Activated naive CD4-positive, alpha-beta T cell treated with anti-CD3 and anti-CD28 coated beads for 36 hours (primary cell): ENCODE measurements at regions of chr3 and their contacts with region 1.

Region 1: GRCh38 chr3:18847583-18848197 is 300.6 kb upstream of the KCNH8 start:
- DNase-seq: no peak
- H3K4me3 Mint-ChIP-seq: no peak overlapping the region
- H3K27ac Mint-ChIP-seq: no peak overlapping the region
- H3K4me1 Mint-ChIP-seq: peaks cover 23% of the 10 kb centered on the region
- H3K27me3 Mint-ChIP-seq: no peaks in the 10 kb centered on the region

Region 2: GRCh38 chr3:18830087-18830486 is 17.6 kb before region 1 on chr3:
- CTCF ChIA-PET with region 1: interaction called, 10 read pairs
- intact Hi-C with region 1: no loop called
- DNase-seq: peak; percentile 60
- H3K4me3 Mint-ChIP-seq: no peak overlapping the region
- H3K27ac Mint-ChIP-seq: peak overlapping the region; percentile 31
- H3K4me1 Mint-ChIP-seq: peaks cover 25% of the 10 kb centered on the region
- H3K27me3 Mint-ChIP-seq: no peaks in the 10 kb centered on the region

Region 3: GRCh38 chr3:19030522-19030839 is 182.8 kb after region 1 on chr3:
- CTCF ChIA-PET with region 1: no interaction called
- intact Hi-C with region 1: loop called (anchors 1 kb)
- DNase-seq: peak; percentile 44
- H3K4me3 Mint-ChIP-seq: no peak overlapping the region
- H3K27ac Mint-ChIP-seq: no peak overlapping the region
- H3K4me1 Mint-ChIP-seq: peaks cover 5% of the 10 kb centered on the region
- H3K27me3 Mint-ChIP-seq: peaks cover 4% of the 10 kb centered on the region

Region 4: GRCh38 chr3:19046440-19046839 is 198.8 kb after region 1 on chr3:
- CTCF ChIA-PET with region 1: no interaction called
- intact Hi-C with region 1: no loop called
- DNase-seq: no peak
- H3K4me3 Mint-ChIP-seq: no peak overlapping the region
- H3K27ac Mint-ChIP-seq: no peak overlapping the region
- H3K4me1 Mint-ChIP-seq: no peaks in the 10 kb centered on the region
- H3K27me3 Mint-ChIP-seq: no peaks in the 10 kb centered on the region